ENCODE measurements at regions of chr11 and their contacts with region 1.

Region 1: GRCh38 chr11:72573072-72573854 is 101.0 kb downstream of the PDE2A start:
- DNase-seq: peak; percentile 92
- H3K4me3 ChIP-seq: no peak overlapping the region
- H3K27ac ChIP-seq: no peak overlapping the region
- H3K4me1 ChIP-seq: no peaks in the 10 kb centered on the region; a peak in 3 of 4 replicates
- H3K27me3 ChIP-seq: no peaks in the 10 kb centered on the region
- CTCF ChIP-seq: peak; percentile 64
- EP300 ChIP-seq: no peak
- RAD21 ChIP-seq: peak; percentile 78

Region 2: DNA sequence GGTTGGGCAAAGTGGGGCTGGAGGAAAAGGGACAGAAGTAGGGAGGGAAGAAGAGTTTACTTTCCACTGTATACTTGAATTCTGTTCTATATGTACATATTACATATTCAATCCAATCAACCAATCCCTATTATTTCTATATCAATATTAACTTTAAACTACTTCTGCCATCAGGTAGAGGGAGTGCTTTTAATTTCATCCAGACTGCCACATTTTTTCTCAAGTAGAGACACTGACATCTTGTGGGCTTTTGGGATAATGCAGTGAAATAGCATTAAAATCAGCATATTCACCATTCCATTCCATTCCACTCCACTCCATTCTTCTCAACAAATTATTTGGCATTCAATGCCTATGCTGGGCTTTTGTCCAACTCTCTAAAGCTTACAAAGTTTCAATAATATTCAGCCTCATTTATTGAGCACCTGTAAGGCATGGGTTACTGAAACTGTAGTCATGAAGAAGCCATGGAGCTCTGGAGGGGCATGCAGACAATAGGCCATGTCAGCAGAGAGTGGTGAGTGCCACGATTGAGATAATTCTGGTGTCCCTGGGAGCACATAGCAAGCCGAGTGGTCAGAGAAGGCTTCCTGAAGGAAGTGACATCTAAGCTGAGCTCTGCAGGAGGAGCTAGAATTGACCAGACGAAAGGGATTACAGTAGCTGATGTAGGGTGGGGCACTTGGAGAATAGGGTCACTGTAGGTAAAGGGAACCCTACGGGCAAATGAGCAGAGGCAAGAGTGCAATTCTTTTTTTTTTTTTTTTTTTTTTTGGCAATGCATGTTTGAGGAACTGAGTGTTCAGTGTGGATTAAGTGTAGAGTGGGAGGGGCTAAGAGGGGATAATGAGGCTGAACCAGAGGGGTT is 126.1 kb before region 1 on chr11:
- CTCF ChIA-PET with region 1: interaction called, 10 read pairs
- POLR2A ChIA-PET with region 1: no interaction called
- DNase-seq: peak; percentile 72
- H3K4me3 ChIP-seq: no peak overlapping the region; a peak in 1 of 4 replicates
- H3K27ac ChIP-seq: no peak overlapping the region
- H3K4me1 ChIP-seq: no peaks in the 10 kb centered on the region; a peak in 1 of 4 replicates
- H3K27me3 ChIP-seq: no peaks in the 10 kb centered on the region; the same call in 1 of the 2 replicates
- CTCF ChIP-seq: peak; percentile 87
- EP300 ChIP-seq: no peak
- RAD21 ChIP-seq: peak; percentile 88

Region 3: GRCh38 chr11:72493426-72494108 is 79.7 kb before region 1 on chr11:
- CTCF ChIA-PET with region 1: interaction called, 16 read pairs
- POLR2A ChIA-PET with region 1: no interaction called
- DNase-seq: no peak
- H3K4me3 ChIP-seq: no peak overlapping the region
- H3K27ac ChIP-seq: no peak overlapping the region
- H3K4me1 ChIP-seq: no peaks in the 10 kb centered on the region; a peak in 1 of 4 replicates
- H3K27me3 ChIP-seq: peaks cover 5% of the 10 kb centered on the region; the same call in 1 of the 2 replicates
- CTCF ChIP-seq: no peak
- EP300 ChIP-seq: no peak
- RAD21 ChIP-seq: no peak

Region 4: DNA sequence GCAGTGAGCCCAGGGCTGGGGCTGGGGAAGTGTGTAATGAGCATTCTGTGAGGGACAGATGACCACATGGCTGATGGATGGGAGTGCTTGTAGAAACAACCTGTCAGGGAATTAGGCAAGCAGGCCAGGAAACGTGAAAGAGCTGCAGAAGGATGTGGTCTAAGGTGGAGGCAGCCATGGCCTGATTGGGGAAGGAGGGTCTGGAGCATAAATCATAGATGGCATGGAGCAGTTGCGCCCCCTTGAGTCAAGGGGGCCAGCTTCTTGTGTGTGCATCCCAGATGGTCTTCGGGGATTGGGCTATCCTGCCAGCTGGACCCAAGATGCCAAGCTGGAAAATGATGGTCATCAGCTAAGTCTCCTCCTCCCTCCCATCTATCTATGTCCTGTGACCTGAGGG is 19.6 kb before region 1 on chr11:
- CTCF ChIA-PET with region 1: interaction called, 15 read pairs
- POLR2A ChIA-PET with region 1: no interaction called
- DNase-seq: no peak
- H3K4me3 ChIP-seq: no peak overlapping the region
- H3K27ac ChIP-seq: peak overlapping the region in 1 of 2 experiments; percentile 25; a peak in 1 of 4 replicates
- H3K4me1 ChIP-seq: peaks cover 0 to 13% of the 10 kb centered on the region in 2 experiments; a peak in 1 of 4 replicates
- H3K27me3 ChIP-seq: peaks cover 15% of the 10 kb centered on the region
- CTCF ChIP-seq: no peak
- EP300 ChIP-seq: no peak
- RAD21 ChIP-seq: peak; percentile 53

Region 5: GRCh38 chr11:72561856-72562255 is 11.4 kb before region 1 on chr11:
- CTCF ChIA-PET with region 1: interaction called, 21 read pairs
- POLR2A ChIA-PET with region 1: no interaction called
- DNase-seq: no peak
- H3K4me3 ChIP-seq: no peak overlapping the region
- H3K27ac ChIP-seq: no peak overlapping the region
- H3K4me1 ChIP-seq: no peaks in the 10 kb centered on the region; a peak in 1 of 4 replicates
- H3K27me3 ChIP-seq: peaks cover 9% of the 10 kb centered on the region; the same call in 1 of the 2 replicates
- CTCF ChIP-seq: no peak
- EP300 ChIP-seq: no peak
- RAD21 ChIP-seq: no peak

Region 6: GRCh38 chr11:72585762-72586311 is 12.6 kb after region 1 on chr11:
- CTCF ChIA-PET with region 1: interaction called, 13 read pairs
- POLR2A ChIA-PET with region 1: no interaction called
- DNase-seq: peak; percentile 89
- H3K4me3 ChIP-seq: no peak overlapping the region
- H3K27ac ChIP-seq: no peak overlapping the region
- H3K4me1 ChIP-seq: no peaks in the 10 kb centered on the region; a peak in 1 of 4 replicates
- H3K27me3 ChIP-seq: peaks cover 20% of the 10 kb centered on the region
- CTCF ChIP-seq: peak; percentile 90
- EP300 ChIP-seq: no peak
- RAD21 ChIP-seq: peak; percentile 87

Region 7: GRCh38 chr11:72625691-72626413 is 52.6 kb after region 1 on chr11:
- CTCF ChIA-PET with region 1: no interaction called
- POLR2A ChIA-PET with region 1: no interaction called
- DNase-seq: peak; percentile 84
- H3K4me3 ChIP-seq: no peak overlapping the region
- H3K27ac ChIP-seq: peak overlapping the region in 1 of 2 experiments; percentile 85; a peak in 2 of 4 replicates
- H3K4me1 ChIP-seq: peaks cover 0 to 69% of the 10 kb centered on the region in 2 experiments; a peak in 2 of 4 replicates
- H3K27me3 ChIP-seq: peaks cover 12% of the 10 kb centered on the region; the same call in 1 of the 2 replicates
- CTCF ChIP-seq: no peak
- EP300 ChIP-seq: peak in 1 of 2 experiments; percentile 42; a peak in 1 of 4 replicates
- RAD21 ChIP-seq: no peak

Region 8: DNA sequence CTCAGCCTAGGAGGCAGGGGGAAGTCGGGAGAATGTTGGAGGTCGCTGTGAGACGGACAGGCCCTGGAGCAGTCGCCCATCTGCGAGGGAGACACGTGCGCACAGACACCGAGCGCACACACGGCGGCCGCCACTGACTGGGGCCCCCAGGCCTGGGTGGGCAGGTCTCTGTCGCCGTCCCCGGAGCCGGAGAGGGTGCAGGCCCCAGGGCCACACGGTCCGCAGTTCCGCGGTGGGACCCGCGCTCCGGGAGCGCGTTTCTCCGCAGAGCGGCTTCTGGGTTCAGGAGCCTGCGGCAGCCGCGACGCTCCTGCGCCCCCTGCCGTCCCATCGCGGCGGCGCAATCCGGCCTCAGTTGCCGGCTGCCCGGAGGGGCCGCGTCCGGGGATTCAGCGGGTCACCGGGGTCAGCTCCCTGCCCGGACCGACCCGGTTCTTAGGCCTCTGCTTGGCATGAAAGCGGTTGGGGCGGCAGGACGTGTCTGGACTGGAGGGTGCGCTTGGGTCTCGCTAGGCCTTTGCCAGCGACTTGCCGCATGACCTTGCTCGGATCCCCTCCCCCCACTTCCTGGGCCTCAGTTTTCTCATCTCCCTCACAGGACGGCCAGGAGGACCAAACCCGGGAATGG is 69.7 kb after region 1 on chr11:
- CTCF ChIA-PET with region 1: interaction called, 10 read pairs
- POLR2A ChIA-PET with region 1: no interaction called
- DNase-seq: peak; percentile 92
- H3K4me3 ChIP-seq: peak overlapping the region; percentile 42 to 61
- H3K27ac ChIP-seq: no peak overlapping the region
- H3K4me1 ChIP-seq: peaks cover 5 to 16% of the 10 kb centered on the region in 2 experiments; a peak in 1 of 4 replicates
- H3K27me3 ChIP-seq: peaks cover 30% of the 10 kb centered on the region
- CTCF ChIP-seq: peak; percentile 76
- EP300 ChIP-seq: no peak
- RAD21 ChIP-seq: peak; percentile 85

Region 9: DNA sequence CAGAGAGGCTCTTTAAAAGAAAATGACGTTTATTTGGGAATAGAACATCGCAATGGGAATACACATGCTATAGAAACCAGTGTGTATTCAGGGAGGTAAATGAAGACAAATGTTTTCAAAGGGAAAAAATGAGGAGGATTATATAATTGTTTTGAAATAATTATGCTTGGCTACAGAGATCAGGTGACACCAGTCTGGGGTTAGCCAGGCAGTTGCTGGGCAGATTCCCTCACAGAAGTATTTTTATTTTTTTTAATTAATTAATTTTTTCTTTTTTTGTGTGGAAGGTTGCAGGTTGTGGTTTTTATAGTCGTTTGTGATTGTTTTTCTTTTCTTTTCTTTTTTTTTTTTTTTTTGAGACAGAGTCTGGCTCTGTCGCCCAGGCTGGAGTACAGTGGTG is 226.2 kb after region 1 on chr11:
- CTCF ChIA-PET with region 1: no interaction called
- POLR2A ChIA-PET with region 1: no interaction called
- DNase-seq: no peak
- H3K4me3 ChIP-seq: no peak overlapping the region
- H3K27ac ChIP-seq: no peak overlapping the region
- H3K4me1 ChIP-seq: peaks cover 0 to 3% of the 10 kb centered on the region in 2 experiments; a peak in 1 of 4 replicates
- H3K27me3 ChIP-seq: no peaks in the 10 kb centered on the region
- CTCF ChIP-seq: no peak
- EP300 ChIP-seq: no peak
- RAD21 ChIP-seq: no peak

Measured in SK-N-SH (cell line).